Thyroid gland (tissue), 4 donors: ENCODE measurements at regions of chr16 and their contacts with region 1.

Region 1: GRCh38 chr16:66869424-66869823 is 10.9 kb upstream of the PDP2 start:
- DNase-seq: no peak
- H3K4me3 ChIP-seq: no peak overlapping the region
- H3K27ac ChIP-seq: no peak overlapping the region
- H3K4me1 ChIP-seq: peaks cover 13 to 21% of the 10 kb centered on the region in 2 donors
- H3K27me3 ChIP-seq: no peaks in the 10 kb centered on the region
- CTCF ChIP-seq: no peak
- POLR2A ChIP-seq: no peak

Region 2: DNA sequence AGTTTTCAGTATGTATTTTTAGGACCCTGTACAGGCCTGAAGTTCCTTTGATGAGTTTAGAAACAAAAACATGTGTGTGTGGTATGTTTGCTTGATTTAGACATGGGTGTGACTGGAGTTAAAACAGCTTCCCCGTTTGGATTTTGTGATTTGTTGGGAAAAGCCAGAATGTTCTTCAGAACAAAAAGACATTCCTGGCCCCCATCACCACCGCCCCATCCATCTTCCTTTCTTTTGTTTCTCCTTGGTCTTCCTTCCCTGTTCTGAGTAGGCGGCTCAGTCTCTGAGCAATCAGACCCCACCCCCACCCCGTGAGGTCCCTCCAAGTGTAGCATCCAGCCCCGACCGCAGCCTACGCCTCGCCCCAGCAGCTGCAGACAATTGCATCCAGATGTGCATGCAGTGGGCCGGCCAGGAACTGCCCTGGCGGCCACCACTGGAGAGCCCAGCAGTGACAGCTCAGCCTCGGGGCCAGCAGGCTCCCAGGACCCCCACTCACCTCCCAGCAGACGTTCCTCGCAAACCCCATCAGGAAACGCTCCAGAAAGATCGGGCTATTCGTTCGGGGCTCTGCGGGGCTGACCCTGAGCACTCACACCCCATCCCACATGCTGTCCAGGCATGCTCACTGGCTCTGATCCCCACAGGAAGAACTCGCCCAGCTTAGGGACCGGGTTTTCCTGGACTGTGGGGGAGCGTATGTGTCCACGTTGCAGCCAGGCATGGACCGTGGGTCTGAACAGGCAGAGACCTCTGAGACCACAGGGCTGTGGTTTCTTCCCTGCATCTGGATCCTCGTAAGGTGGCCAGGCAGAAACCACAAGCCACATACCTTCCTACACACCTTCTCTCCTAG is 602.8 kb before region 1 on chr16:
- intact Hi-C with region 1: no loop called
- DNase-seq: peak in 1 of 2 donors; percentile 17
- H3K4me3 ChIP-seq: no peak overlapping the region
- H3K27ac ChIP-seq: no peak overlapping the region
- H3K4me1 ChIP-seq: peaks cover 3 to 13% of the 10 kb centered on the region in 2 donors
- H3K27me3 ChIP-seq: no peaks in the 10 kb centered on the region
- CTCF ChIP-seq: no peak
- POLR2A ChIP-seq: no peak

Region 3: DNA sequence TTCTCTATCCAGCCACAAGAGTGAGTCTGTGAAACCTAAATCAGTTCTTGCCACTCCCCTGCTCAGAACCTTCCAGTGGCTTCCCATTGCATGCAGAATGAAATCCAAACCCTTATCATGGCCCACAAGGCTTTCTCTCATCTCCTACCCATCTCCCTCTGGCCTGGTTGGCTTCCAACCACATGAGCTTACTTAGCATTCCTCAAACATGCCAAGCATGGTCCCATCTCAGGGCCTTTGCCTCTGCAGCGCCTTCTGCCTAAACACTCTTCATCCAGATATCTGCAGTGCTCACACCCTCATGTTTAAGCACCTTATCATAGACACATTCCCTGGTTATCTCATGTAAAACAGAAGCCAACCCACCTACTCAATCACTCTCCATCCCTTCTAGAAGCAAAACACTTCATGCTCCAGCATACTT is 335.0 kb before region 1 on chr16:
- intact Hi-C with region 1: no loop called
- DNase-seq: no peak
- H3K4me3 ChIP-seq: no peak overlapping the region
- H3K27ac ChIP-seq: no peak overlapping the region
- H3K4me1 ChIP-seq: peaks cover 0 to 7% of the 10 kb centered on the region in 2 donors
- H3K27me3 ChIP-seq: no peaks in the 10 kb centered on the region
- CTCF ChIP-seq: no peak
- POLR2A ChIP-seq: no peak

Region 4: GRCh38 chr16:66608241-66609138 is 260.9 kb before region 1 on chr16:
- intact Hi-C with region 1: loop called (anchors 5 kb)
- DNase-seq: peak; percentile 95 to 96
- H3K4me3 ChIP-seq: no peak overlapping the region
- H3K27ac ChIP-seq: peak overlapping the region in 2 of 3 donors; percentile 28 to 37
- H3K4me1 ChIP-seq: peaks cover 13 to 29% of the 10 kb centered on the region in 2 donors
- H3K27me3 ChIP-seq: no peaks in the 10 kb centered on the region
- CTCF ChIP-seq: peak; percentile 79 to 91 (median 88)
- POLR2A ChIP-seq: no peak

Region 5: GRCh38 chr16:66660422-66661209 is 208.8 kb before region 1 on chr16:
- intact Hi-C with region 1: no loop called
- DNase-seq: peak; percentile 88 to 89
- H3K4me3 ChIP-seq: no peak overlapping the region
- H3K27ac ChIP-seq: peak overlapping the region; percentile 85 to 90 (median 85)
- H3K4me1 ChIP-seq: peaks cover 35 to 50% of the 10 kb centered on the region in 2 donors
- H3K27me3 ChIP-seq: no peaks in the 10 kb centered on the region
- CTCF ChIP-seq: peak in 4 of 6 experiments; percentile 32 to 51 (median 38)
- POLR2A ChIP-seq: no peak

Region 6: DNA sequence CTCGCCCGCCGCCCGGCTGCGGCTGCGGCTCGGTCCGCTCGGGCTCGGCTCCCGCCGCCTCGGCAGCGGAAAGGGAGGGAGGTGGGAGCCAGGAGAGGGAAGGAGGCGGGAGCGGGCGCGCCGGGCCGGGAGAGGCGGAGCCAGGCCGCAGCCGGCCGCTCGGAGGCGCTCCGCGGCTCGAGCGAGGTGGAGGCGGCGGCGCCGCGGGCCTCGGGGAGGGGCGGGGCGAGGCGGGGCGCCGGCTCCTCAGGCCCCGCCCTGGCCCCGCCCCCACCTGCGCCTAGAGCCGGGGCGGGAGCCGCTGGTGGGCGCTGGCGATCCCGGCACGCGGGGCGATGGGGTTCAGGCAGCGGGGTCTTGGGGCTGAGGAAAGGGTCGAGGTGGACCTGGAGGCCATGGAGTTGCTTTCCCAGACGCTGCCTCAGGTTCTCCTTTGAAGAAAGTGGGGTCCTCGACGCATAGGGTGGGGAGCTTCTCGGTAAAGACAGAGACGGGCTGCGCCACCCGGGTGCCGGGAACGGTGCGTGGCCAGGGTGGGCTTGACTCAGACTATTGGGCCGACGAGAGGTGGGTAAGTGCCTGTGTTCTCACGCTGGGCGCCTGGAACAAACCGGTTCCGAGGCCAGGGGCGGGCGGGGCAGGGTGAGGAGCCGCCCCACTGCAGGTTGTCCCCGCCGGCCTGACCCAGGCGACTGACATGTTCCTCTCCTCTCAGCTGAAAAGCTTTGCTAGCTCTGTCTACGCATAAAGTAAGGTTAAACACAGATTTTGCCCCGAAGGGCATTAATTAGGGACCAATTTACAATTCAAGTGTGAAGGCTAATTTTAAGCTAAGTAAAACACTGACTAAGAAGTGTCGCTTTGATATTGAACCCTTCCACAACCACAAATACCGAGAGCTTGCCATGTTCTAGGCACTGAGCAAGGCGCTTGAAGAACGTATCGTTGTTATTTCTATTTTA is 172.5 kb before region 1 on chr16 and contains the start of gene CMTM4:
- intact Hi-C with region 1: no loop called
- DNase-seq: peak; percentile 95 to 96
- H3K4me3 ChIP-seq: peak within 1 kb of the TSS; percentile 52 to 71 (median 64)
- H3K27ac ChIP-seq: peak within 1 kb of the TSS; percentile 85 to 95 (median 92)
- H3K4me1 ChIP-seq: peaks cover 37 to 48% of the 10 kb centered on the region in 2 donors
- H3K27me3 ChIP-seq: no peaks in the 10 kb centered on the region
- CTCF ChIP-seq: peak in 3 of 6 experiments; percentile 23 to 40 (median 25)
- POLR2A ChIP-seq: peak in 1 of 2 donors; percentile 74
- total RNA-seq, gene CMTM4: 170 to 246 (median 201) TPM

Region 7: DNA sequence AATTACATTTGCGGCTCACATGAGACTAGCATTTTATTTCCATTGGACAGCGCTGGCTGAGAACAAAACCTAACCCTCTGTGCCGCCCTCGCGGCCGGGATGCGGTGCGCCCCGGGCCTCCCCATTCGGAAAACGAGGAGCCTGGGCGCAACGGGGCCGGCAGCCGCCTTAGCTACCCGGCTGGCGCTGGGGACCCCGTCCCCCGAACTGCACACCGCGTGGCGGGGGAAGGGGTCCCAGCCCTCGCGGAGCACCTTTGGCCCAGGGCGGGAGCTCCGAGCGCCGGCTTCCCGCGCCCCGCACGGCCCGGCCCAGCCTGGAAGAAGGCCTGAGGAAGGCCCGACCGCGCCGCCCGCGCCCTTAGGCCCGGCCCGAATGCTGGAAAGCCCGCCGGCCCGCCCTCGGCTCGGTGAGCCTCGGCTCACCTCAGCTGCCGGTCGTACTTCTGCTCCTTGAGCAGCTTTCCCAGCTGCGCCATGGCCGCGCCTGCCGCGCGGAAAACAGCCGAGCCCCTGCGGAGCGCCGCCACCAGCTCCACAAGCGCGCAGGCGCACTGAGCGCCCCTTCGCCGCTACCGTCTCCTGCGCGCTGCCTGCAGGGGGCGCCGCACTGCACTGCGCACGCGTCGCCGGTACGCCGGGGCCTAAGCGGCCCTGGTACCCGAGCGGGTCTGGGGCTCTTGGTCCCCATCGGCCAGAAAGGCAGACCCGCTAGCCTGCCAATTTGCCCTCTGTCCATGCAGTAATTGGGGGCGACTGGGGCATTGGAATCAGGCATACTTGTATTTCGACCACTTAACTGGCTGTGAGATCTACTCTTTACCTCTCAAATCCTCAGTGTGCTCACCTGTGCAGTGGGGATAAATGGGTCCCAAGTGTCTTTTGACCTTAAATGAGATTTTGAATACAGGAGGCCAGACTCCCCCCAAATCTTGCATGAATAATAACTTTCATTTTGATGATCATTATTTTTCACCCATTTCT is 38.7 kb before region 1 on chr16 and contains the start of gene NAE1:
- intact Hi-C with region 1: loop called (anchors 5 kb)
- DNase-seq: peak; percentile 80 to 86
- H3K4me3 ChIP-seq: peak within 1 kb of the TSS; percentile 12 to 99 (median 83)
- H3K27ac ChIP-seq: peak within 1 kb of the TSS; percentile 73 to 90 (median 89)
- H3K4me1 ChIP-seq: peaks cover 9 to 15% of the 10 kb centered on the region in 2 donors
- H3K27me3 ChIP-seq: no peaks in the 10 kb centered on the region
- CTCF ChIP-seq: peak; percentile 77 to 99 (median 96)
- POLR2A ChIP-seq: peak; percentile 83 to 86
- total RNA-seq, gene NAE1: 51.0 to 75.0 (median 61.2) TPM